Activated naive CD4-positive, alpha-beta T cell treated with anti-CD3 and anti-CD28 coated beads for 36 hours (primary cell): ENCODE measurements at regions of chr14 and their contacts with region 1.

Region 1: GRCh38 chr14:106511006-106511799 is 984.8 kb downstream of the TMEM121 start:
- DNase-seq: peak; percentile 72
- H3K4me3 Mint-ChIP-seq: no peak overlapping the region
- H3K27ac Mint-ChIP-seq: peak overlapping the region; percentile 16
- H3K4me1 Mint-ChIP-seq: peaks cover 76% of the 10 kb centered on the region
- H3K27me3 Mint-ChIP-seq: no peaks in the 10 kb centered on the region

Region 2: GRCh38 chr14:106277503-106277902 is 233.7 kb before region 1 on chr14:
- CTCF ChIA-PET with region 1: no interaction called
- intact Hi-C with region 1: no loop called
- DNase-seq: peak; percentile 50
- H3K4me3 Mint-ChIP-seq: no peak overlapping the region
- H3K27ac Mint-ChIP-seq: no peak overlapping the region
- H3K4me1 Mint-ChIP-seq: peaks cover 17% of the 10 kb centered on the region
- H3K27me3 Mint-ChIP-seq: peaks cover 25% of the 10 kb centered on the region

Region 3: DNA sequence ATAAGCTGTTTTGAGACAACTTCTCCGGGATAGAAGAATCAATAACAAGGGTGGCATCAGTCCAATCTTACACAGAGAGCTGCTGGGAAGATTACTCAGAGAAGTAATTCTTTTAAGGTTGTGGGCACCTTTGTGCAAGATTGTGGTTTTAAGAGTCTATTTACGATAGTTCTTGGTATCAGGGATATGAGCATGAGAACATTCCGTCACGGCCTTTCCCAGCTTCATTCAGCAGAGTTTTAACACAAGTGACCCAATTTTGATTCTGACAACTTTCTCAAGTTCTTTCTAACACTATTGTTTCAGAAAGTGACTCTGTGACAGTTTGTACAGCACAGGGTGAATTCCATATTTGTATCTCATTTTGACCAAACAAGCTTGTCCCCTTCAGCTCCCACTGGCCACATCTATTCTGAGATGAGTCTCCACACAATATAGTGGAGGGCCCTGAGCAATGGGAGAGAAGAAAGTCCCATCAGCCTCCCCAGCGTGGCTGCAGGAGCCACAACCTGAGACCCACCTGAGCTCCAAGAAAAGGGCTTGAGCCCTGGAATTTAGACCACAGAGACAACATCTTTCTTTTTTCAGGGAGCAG is 115.7 kb before region 1 on chr14:
- CTCF ChIA-PET with region 1: no interaction called
- intact Hi-C with region 1: loop called (anchors 1 kb)
- DNase-seq: peak; percentile 74
- H3K4me3 Mint-ChIP-seq: peak overlapping the region; percentile 63
- H3K27ac Mint-ChIP-seq: peak overlapping the region; percentile 92
- H3K4me1 Mint-ChIP-seq: peaks cover 39% of the 10 kb centered on the region
- H3K27me3 Mint-ChIP-seq: peaks cover 8% of the 10 kb centered on the region

Region 4: DNA sequence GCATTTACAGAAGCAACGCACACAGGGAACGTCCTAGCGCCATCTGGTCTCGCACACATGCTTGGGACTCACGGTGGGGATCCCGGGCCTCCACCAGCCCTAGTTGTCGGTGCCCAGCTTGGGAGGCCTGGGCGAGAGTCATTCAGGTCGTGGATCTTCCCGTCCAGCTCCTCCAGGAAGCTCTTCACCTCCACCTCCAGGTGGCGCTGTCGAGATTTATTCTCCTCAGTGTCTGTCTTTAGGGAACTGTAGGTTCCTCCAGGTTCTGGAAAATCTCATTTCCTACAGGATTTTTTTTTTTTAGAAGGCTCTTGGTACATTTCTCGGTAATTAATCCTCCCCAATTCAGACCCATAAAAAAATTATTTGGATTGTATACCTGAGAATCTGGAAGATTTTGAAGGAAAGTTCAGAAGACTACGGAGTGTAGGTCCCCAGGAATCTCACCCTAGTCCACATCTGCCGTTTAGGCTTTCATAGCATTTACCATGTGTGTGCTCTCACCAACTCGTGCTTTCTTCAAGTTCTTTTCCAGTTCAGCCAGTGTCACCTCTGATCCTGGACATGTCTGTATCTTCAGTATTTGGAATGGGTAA is 74.8 kb before region 1 on chr14:
- CTCF ChIA-PET with region 1: interaction called, 26 read pairs
- intact Hi-C with region 1: no loop called
- DNase-seq: peak; percentile 75
- H3K4me3 Mint-ChIP-seq: no peak overlapping the region
- H3K27ac Mint-ChIP-seq: no peak overlapping the region
- H3K4me1 Mint-ChIP-seq: peaks cover 7% of the 10 kb centered on the region
- H3K27me3 Mint-ChIP-seq: peaks cover 10% of the 10 kb centered on the region

Region 5: DNA sequence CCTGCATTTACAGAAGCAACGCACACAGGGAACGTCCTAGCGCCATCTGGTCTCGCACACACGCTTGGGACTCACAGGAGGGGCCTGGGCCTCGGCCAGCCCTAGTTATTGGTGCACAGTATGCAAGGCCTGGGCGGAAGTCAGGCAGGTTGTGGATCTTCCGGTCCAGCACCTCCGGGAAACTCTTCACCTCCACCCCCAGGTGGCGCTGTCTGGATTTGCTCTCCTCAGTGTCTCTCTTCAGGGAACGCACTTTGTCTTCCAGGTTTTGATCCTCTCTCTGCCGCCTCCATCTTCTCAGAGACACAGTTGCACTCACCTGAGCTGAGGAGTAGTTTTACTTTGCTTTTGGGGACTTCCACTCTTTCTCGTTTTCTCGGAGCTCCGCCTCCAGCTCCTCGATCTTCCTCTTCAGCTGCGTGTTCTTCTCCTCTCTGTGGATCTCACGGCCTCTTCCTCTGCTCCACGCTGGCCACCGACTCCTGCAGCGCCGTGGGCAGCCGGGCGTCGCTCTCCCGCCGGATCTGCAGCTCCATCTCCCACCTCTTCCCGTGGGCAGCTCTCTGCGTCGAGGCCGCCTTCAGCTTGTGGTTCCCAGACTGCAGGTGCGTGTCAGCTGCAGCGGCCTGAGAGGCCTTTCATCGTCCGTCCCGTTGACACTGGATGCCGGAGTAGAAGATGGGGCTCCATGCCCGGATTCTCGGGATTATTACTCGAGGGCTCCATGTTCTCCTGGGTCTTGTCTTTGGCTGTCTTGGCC is 51.1 kb before region 1 on chr14:
- CTCF ChIA-PET with region 1: interaction called, 23 read pairs
- intact Hi-C with region 1: no loop called
- DNase-seq: peak; percentile 75
- H3K4me3 Mint-ChIP-seq: no peak overlapping the region
- H3K27ac Mint-ChIP-seq: no peak overlapping the region
- H3K4me1 Mint-ChIP-seq: no peaks in the 10 kb centered on the region
- H3K27me3 Mint-ChIP-seq: no peaks in the 10 kb centered on the region

Region 6: DNA sequence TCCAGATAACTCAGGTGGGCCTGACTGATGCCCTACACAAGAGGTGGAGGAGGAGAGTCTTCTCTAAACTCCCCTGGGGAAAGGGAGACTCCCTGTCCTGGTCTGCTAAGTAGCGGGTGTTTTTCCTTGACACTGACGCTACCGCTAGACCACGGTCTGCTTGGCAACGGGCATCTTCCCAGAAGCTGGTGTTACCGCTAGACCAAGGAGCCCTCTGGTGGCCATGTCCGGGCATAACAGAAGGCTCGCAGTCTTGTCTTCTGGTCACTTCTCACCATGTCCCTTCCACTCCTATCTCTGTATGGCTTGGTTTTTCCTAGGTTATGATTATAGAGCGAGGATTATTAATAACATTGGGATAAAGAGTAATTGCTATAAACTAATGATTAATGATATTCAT is 19.4 kb before region 1 on chr14:
- CTCF ChIA-PET with region 1: interaction called, 100 read pairs
- intact Hi-C with region 1: loop called (anchors 1 kb)
- DNase-seq: peak; percentile 43
- H3K4me3 Mint-ChIP-seq: no peak overlapping the region
- H3K27ac Mint-ChIP-seq: no peak overlapping the region
- H3K4me1 Mint-ChIP-seq: peaks cover 27% of the 10 kb centered on the region
- H3K27me3 Mint-ChIP-seq: no peaks in the 10 kb centered on the region

Region 7: GRCh38 chr14:106586098-106586704 is 75.0 kb after region 1 on chr14:
- CTCF ChIA-PET with region 1: no interaction called
- intact Hi-C with region 1: no loop called
- DNase-seq: peak; percentile 84
- H3K4me3 Mint-ChIP-seq: no peak overlapping the region
- H3K27ac Mint-ChIP-seq: no peak overlapping the region
- H3K4me1 Mint-ChIP-seq: peaks cover 10% of the 10 kb centered on the region
- H3K27me3 Mint-ChIP-seq: peaks cover 20% of the 10 kb centered on the region

Region 8: GRCh38 chr14:106657460-106657859 is 146.3 kb after region 1 on chr14:
- CTCF ChIA-PET with region 1: no interaction called
- intact Hi-C with region 1: loop called (anchors 1 kb)
- DNase-seq: peak; percentile 88
- H3K4me3 Mint-ChIP-seq: no peak overlapping the region
- H3K27ac Mint-ChIP-seq: no peak overlapping the region
- H3K4me1 Mint-ChIP-seq: peaks cover 17% of the 10 kb centered on the region
- H3K27me3 Mint-ChIP-seq: no peaks in the 10 kb centered on the region